Testis (tissue), 5 donors: ENCODE measurements at regions of chr19 and their contacts with region 1.

Region 1: GRCh38 chr19:2648528-2648937 is 54.0 kb downstream of the GNG7 start:
- DNase-seq: peak; percentile 82
- H3K4me3 ChIP-seq: no peak overlapping the region
- H3K27ac ChIP-seq: no peak overlapping the region
- H3K4me1 ChIP-seq: peaks cover 20% of the 10 kb centered on the region
- H3K27me3 ChIP-seq: no peaks in the 10 kb centered on the region
- CTCF ChIP-seq: peak; percentile 73 to 93 (median 84)
- POLR2A ChIP-seq: no peak

Region 2: DNA sequence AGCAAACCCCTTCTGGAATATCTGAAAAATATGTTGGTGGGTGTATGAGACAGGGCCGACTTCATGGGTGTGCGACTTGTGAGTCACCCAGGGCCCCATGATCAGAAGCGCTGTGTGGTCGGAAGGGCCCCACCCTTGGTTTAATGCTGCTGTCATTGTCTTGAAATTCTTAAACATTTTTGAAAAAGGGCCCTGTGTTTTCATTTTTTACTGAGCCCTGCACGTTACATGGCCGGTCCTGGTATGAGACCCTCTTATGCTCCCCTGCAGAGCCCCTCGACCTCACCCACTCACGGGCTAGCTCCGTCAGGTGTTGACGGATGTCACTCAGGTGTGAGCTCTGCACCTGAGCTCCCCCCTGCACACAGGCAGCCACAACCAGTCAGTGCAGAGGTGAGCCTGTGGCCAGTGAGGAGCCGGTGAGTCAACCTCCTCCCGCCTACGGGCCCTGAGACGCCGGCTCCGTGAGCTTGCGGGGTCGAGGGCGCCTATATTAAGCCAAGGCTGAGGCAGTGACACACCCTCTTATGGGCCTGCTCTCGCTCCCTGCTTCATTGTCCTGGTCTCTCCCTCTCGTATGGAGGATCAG is 144.9 kb before region 1 on chr19:
- intact Hi-C with region 1: no loop called
- DNase-seq: no peak
- H3K4me3 ChIP-seq: no peak overlapping the region
- H3K27ac ChIP-seq: no peak overlapping the region
- H3K4me1 ChIP-seq: peaks cover 5% of the 10 kb centered on the region
- H3K27me3 ChIP-seq: no peaks in the 10 kb centered on the region
- CTCF ChIP-seq: no peak
- POLR2A ChIP-seq: no peak

Region 3: DNA sequence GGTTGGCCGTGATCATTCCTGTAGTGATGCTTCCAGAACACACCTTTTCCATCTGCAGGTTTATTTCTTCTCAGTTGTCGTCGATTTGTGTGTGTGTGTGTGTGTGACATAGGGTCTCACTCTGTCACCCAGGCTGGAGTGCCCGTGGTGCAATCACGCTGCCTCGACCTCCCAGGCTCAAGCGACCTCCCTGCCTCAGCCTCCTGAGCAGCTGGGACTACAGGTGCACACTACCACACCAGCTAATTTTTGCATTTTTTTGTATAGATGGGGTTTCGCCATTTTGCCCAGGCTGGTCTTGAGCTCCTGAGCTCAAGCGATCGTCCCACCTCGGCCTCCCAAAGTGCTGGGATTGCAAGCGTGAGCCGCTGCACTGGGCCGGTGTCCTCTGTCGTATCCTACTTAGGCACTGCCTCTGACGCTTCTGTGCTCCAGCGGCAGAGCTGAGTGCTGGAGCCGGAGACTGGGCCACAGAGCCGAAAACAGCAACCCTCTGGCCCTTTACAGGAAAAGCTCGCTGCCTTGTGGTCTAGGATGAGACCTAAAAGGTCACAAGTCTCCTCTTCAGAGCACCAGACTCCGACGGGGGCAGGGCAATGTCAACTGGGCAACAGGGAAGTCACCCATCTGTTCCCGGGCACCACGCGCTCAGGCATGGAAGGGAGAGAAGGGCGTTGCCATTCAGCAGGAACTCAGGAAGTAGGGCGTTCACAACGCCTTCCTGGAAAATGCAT is 81.1 kb before region 1 on chr19:
- intact Hi-C with region 1: no loop called
- DNase-seq: peak; percentile 57
- H3K4me3 ChIP-seq: no peak overlapping the region
- H3K27ac ChIP-seq: peak overlapping the region in 1 of 2 donors; percentile 56
- H3K4me1 ChIP-seq: no peaks in the 10 kb centered on the region
- H3K27me3 ChIP-seq: no peaks in the 10 kb centered on the region
- CTCF ChIP-seq: no peak
- POLR2A ChIP-seq: no peak

Region 4: GRCh38 chr19:2887391-2887914 is 238.9 kb after region 1 on chr19:
- intact Hi-C with region 1: loop called (anchors 10 kb)
- DNase-seq: peak; percentile 32
- H3K4me3 ChIP-seq: no peak overlapping the region
- H3K27ac ChIP-seq: peak overlapping the region in 1 of 2 donors; percentile 43
- H3K4me1 ChIP-seq: peaks cover 8% of the 10 kb centered on the region
- H3K27me3 ChIP-seq: no peaks in the 10 kb centered on the region
- CTCF ChIP-seq: peak; percentile 40 to 66 (median 63)
- POLR2A ChIP-seq: no peak